ENCODE measurements at regions of chr2 and their contacts with region 1.

Region 1: GRCh38 chr2:71276311-71277146 is 49.6 kb upstream of the PAIP2B start:
- DNase-seq: peak; percentile 58 to 88 (median 77)
- ATAC-seq: peak; percentile 99
- H3K4me3 ChIP-seq: peak overlapping the region; percentile 55 to 80
- H3K4me3 Mint-ChIP-seq: peak overlapping the region; percentile 76
- H3K27ac ChIP-seq: no peak overlapping the region
- H3K27ac Mint-ChIP-seq: no peak overlapping the region
- H3K4me1 ChIP-seq: peaks cover 16% of the 10 kb centered on the region
- H3K4me1 Mint-ChIP-seq: peaks cover 16% of the 10 kb centered on the region
- H3K27me3 ChIP-seq: peaks cover 18 to 28% of the 10 kb centered on the region in 2 experiments
- H3K27me3 Mint-ChIP-seq: peaks cover 70% of the 10 kb centered on the region
- CTCF ChIP-seq: no peak

Region 2: GRCh38 chr2:71226965-71227560 is 49.5 kb before region 1 on chr2 and contains the start of gene PAIP2B:
- CTCF ChIA-PET with region 1: interaction called, 3 read pairs
- POLR2A ChIA-PET with region 1: no interaction called
- intact Hi-C with region 1: loop called (anchors 1 kb)
- DNase-seq: peak; percentile 95 to 99 (median 96)
- ATAC-seq: peak; percentile 89
- H3K4me3 ChIP-seq: peak within 1 kb of the TSS; percentile 77 to 81
- H3K4me3 Mint-ChIP-seq: peak within 1 kb of the TSS; percentile 97
- H3K27ac ChIP-seq: peak within 1 kb of the TSS; percentile 79 to 81
- H3K27ac Mint-ChIP-seq: peak within 1 kb of the TSS; percentile 98
- H3K4me1 ChIP-seq: peaks cover 15% of the 10 kb centered on the region
- H3K4me1 Mint-ChIP-seq: peaks cover 31% of the 10 kb centered on the region
- H3K27me3 ChIP-seq: peaks cover 0 to 2% of the 10 kb centered on the region in 2 experiments
- H3K27me3 Mint-ChIP-seq: peaks cover 12% of the 10 kb centered on the region
- CTCF ChIP-seq: no peak
- total RNA-seq, gene PAIP2B: 1.7 to 1.8 TPM